Heart right ventricle (tissue), 16 donors: ENCODE measurements at regions of chr4 and their contacts with region 1.

Region 1: DNA sequence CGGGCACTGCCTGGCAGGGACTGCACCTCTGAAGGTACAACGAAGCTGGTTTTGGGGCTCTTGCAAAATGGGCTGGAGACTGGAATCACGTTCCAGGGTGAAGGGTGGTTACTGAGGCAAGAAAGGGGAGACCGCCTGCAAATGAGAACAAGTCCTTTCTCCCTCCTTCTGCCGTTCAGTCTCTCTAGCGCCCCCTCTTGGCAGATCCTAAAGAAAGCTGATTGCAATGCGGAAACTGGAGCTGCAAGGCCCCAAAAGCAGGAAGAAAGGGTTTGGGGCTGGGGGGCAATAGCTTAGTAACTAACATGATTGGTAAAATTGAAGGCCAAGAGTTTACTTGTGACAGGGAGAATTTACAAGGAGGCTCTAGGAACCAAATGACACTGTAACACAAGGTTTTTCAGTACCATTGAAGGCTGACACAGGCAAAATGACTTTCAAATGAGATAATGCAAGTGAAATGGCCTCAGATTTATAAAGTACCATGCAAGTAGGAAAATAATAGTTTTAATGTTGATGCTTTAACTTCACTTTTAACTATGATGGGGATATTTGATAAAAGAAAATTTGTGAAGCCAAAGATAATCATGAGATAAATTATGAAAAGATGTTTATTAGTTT is 222.7 kb upstream of the HAND2 start:
- DNase-seq: no peak
- ATAC-seq: no peak
- H3K4me3 ChIP-seq: no peak overlapping the region
- H3K27ac ChIP-seq: no peak overlapping the region
- H3K4me1 ChIP-seq: peaks cover 0 to 5% (median 0%) of the 10 kb centered on the region in 9 donors
- H3K27me3 ChIP-seq: no peaks in the 10 kb centered on the region
- CTCF ChIP-seq: peak in 8 of 9 donors; percentile 9 to 52 (median 46)

Region 2: GRCh38 chr4:173529477-173530325 is 223.0 kb before region 1 on chr4 and contains the start of gene HAND2:
- intact Hi-C with region 1: loop called in 8 of 10 experiments (anchors 2 to 5 kb)
- DNase-seq: peak; percentile 81 to 87
- ATAC-seq: peak; percentile 67 to 80 (median 75)
- H3K4me3 ChIP-seq: peak within 1 kb of the TSS; percentile 56 to 90 (median 74)
- H3K27ac ChIP-seq: peak within 1 kb of the TSS; percentile 89 to 97 (median 96)
- H3K4me1 ChIP-seq: peaks cover 0 to 20% (median 6%) of the 10 kb centered on the region in 9 donors
- H3K27me3 ChIP-seq: peaks cover 0 to 98% (median 50%) of the 10 kb centered on the region in 7 donors
- CTCF ChIP-seq: no peak
- total RNA-seq, gene HAND2: 64.6 to 196 (median 130) TPM

Region 3: GRCh38 chr4:173685165-173685830 is 67.4 kb before region 1 on chr4:
- intact Hi-C with region 1: loop called in 2 of 10 experiments (anchors 5 kb)
- DNase-seq: no peak
- ATAC-seq: no peak
- H3K4me3 ChIP-seq: no peak overlapping the region
- H3K27ac ChIP-seq: peak overlapping the region; percentile 43 to 89 (median 78)
- H3K4me1 ChIP-seq: peaks cover 0 to 39% (median 9%) of the 10 kb centered on the region in 9 donors
- H3K27me3 ChIP-seq: no peaks in the 10 kb centered on the region
- CTCF ChIP-seq: no peak

Region 4: DNA sequence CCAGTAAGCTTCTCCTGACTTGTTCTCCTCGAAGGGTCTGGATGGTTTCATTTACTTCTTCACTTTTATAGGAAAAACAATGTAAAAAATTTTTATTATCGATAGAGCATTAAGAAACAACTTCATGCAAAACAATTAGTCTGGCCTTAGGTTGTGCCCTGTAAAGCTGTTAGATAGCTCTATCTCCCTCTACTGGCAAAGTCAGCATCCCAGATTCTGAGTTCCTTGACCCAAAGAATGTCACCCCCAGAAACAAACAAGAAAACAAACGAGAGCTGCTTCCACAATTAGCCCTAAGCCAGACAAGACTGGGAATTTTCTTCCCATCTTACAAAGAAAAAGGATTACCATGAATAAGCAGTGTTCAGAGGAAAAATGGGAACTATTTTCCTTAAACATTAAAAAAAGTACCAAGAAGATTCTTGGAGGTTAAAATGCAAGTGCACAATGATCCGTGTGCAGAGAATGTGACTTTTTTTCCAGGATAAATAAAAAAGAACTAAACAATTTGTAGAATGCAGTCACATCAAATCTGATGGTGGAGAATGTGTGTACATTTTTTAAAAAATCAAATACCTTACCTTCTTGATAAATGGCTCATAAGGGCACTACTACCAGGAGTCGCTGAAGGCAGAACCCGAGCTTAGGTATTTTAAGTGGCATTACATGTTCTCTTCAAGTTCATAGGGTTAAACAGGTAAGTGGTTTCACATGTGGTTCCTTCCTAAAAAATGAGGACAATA is 237.6 kb after region 1 on chr4:
- intact Hi-C with region 1: loop called in 6 of 10 experiments (anchors 5 to 10 kb)
- DNase-seq: peak in 1 of 2 donors; percentile 11
- ATAC-seq: peak; percentile 56 to 92 (median 76)
- H3K4me3 ChIP-seq: peak overlapping the region in 8 of 10 donors; percentile 3 to 27 (median 12)
- H3K27ac ChIP-seq: peak overlapping the region; percentile 4 to 73 (median 54)
- H3K4me1 ChIP-seq: peaks cover 0 to 20% (median 3%) of the 10 kb centered on the region in 9 donors
- H3K27me3 ChIP-seq: no peaks in the 10 kb centered on the region
- CTCF ChIP-seq: peak in 8 of 9 donors; percentile 32 to 69 (median 56)

Region 5: GRCh38 chr4:174120446-174121295 is 368.0 kb after region 1 on chr4:
- intact Hi-C with region 1: loop called in 1 of 10 experiments (anchors 10 kb)
- DNase-seq: peak; percentile 66 to 67
- ATAC-seq: peak; percentile 67 to 95 (median 83)
- H3K4me3 ChIP-seq: peak overlapping the region in 8 of 10 donors; percentile 17 to 54 (median 44)
- H3K27ac ChIP-seq: peak overlapping the region in 7 of 10 donors; percentile 5 to 65 (median 30)
- H3K4me1 ChIP-seq: peaks cover 0 to 31% (median 0%) of the 10 kb centered on the region in 9 donors
- H3K27me3 ChIP-seq: no peaks in the 10 kb centered on the region
- CTCF ChIP-seq: peak in 8 of 9 donors; percentile 22 to 60 (median 52)

Region 6: GRCh38 chr4:174156239-174156826 is 403.6 kb after region 1 on chr4:
- intact Hi-C with region 1: loop called in 2 of 10 experiments (anchors 5 to 10 kb)
- DNase-seq: peak in 1 of 2 donors; percentile 12
- ATAC-seq: peak; percentile 73 to 85 (median 82)
- H3K4me3 ChIP-seq: peak overlapping the region in 2 of 10 donors; percentile 14
- H3K27ac ChIP-seq: peak overlapping the region in 2 of 10 donors; percentile 28 to 37
- H3K4me1 ChIP-seq: peaks cover 0 to 18% (median 7%) of the 10 kb centered on the region in 9 donors
- H3K27me3 ChIP-seq: no peaks in the 10 kb centered on the region
- CTCF ChIP-seq: peak; percentile 37 to 77 (median 67)